GM10248 (cell line): ENCODE measurements at regions of chr7 and their contacts with region 1.

Region 1: DNA sequence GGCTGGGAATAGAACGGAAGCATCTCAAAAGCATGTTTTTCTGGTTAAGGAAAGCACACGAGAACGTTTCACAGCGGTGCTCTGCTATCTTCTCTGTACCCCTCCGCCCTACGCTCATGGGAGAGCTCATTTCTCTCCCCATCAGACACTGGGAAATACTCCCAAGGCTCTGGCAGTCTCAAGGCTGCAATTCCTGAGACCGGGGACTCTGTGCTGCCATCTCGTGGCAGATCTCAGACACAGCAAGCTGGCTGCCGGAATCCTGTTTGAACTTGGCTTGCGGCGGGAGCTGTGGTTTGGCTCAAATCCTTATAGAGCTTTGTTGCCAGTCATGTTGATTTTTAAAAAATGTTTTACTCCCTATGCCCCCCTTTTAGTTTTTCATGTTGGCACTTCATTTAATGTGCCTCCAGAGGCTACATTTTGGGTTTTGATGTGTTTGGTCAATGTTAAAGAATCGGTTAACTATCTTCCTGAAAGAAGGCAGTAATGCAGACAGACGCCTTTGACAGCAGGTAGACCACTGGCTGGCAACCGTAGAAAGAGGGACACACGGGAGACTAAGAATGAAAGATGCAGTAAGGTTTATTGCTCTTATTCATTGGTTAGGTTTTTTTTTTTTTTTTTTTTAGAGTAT is 27.6 kb downstream of the BMPER start:
- DNase-seq: peak; percentile 56
- CTCF ChIP-seq: peak; percentile 94

Region 2: DNA sequence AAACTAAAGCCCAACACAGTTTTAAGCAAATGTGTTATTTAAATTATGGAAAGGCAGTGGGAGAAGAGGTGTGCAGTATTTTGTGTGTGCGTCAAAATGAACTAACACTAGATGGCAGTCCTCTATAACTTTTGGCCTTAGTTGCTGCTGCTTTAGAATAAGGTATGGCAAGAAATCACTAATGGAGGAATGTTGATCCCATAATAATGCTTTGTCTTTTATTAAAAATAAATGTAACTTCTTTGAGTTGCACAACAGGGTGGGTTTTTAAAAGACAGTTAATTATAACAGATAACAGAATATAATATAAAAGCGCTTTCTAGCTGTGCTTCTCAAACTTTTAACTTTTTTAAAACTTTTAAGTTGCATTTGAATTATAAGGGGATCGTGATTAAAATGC is 747.2 kb before region 1 on chr7:
- CTCF ChIA-PET with region 1: interaction called, 38 read pairs
- POLR2A ChIA-PET with region 1: no interaction called
- DNase-seq: peak; percentile 46
- CTCF ChIP-seq: no peak

Region 3: GRCh38 chr7:33459340-33459751 is 473.6 kb before region 1 on chr7:
- CTCF ChIA-PET with region 1: interaction called, 11 read pairs
- POLR2A ChIA-PET with region 1: no interaction called
- DNase-seq: no peak
- CTCF ChIP-seq: peak; percentile 29

Region 4: DNA sequence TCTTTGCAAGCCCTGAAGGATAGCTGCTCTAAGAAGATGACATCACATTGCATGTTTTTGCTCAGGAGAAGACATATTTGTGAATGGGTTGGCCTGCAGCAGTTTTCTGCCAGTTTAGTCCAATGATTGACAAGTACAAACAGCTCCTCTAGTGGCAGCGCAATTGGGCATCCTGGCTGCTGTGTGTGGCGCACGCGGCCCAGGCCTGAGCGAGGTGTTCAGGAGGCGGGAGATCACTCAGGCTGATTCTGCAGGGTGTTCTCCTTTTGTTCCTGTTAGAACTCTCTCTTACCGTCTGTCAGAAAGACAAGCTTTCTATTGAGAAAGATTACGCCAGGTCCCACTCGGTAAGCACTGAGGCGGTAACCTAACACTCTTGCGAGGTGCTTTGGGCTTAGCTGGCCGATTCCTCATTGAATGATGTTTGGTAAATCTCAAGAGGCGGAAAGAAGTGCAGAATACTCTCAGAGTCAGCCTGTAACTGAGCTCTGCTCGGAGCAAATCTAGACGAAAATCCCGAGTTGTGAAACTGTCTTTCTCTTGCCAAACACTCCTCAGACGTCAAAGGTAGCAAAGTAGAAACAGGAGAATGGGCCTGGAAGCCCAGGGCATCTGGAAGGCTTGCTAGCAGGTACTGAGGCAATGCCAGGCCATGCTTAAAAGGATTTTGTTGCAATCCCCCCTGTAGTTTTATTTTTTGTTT is 246.8 kb before region 1 on chr7:
- CTCF ChIA-PET with region 1: no interaction called
- POLR2A ChIA-PET with region 1: no interaction called
- DNase-seq: no peak
- CTCF ChIP-seq: no peak

Region 5: DNA sequence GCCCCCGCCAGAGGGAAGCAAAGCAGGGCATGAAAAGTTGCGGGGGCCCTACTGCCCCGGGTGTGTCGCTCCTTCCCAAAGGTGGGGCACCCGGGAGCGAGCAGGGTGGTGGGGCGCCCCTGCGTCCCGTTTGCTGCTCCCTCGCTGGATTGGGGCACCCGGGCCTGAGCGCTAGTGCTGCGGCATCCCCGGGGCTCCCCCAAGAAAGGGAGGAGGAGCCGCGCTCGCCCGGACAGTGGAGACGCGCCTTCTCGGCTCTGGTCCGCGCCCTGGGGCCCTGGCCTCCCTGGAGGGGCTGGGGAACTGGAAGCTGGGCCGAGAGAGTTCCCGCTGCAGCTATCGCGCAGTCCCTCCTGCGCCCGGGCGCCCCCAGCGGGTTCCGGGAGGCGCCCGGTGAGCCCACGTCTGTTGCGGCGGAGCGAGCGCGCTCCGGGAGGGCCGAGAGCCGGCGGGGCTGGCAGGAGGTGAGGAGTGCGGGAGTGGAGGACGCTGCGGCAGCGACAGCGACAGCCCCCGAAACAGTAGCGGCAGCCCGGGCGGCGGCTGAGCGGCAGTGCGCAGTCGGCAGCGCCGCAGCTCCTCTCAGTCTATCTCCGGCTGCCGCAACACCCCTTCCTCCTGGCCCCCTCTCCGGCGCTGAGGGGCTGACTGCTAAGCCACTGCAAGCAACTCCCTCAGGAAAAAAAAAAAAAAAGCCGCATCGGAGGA is 28.1 kb before region 1 on chr7:
- CTCF ChIA-PET with region 1: interaction called, 24 read pairs
- POLR2A ChIA-PET with region 1: no interaction called
- DNase-seq: peak; percentile 33
- CTCF ChIP-seq: no peak

Region 6: DNA sequence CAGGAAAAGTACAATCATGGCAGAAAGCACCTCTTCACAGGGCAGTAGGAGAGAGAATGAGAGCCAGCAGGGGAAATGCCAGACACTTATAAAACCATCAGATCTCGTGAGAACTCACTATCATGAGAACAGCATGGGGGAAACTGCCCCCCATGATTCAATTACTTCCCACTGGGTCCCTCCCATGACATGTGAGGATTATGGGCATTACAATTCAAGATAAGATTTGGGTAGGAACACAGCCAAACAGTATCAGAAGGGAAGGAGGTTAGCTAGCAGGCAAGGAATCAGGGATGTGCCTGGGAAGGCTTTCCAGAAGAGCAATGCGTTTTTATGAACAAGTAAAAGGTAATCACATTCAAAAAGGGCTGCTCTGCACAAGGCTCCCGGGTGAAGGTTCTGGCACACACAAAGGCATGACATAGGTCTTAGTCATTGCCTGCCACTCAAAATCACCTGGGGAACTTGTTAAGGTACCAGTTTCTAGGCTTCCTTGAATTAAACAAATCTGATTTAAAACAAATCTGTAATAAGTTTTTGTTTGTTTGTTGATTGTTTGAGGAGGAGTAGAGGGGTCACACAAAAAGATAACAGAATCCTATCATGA is 13.2 kb after region 1 on chr7:
- CTCF ChIA-PET with region 1: interaction called, 25 read pairs
- POLR2A ChIA-PET with region 1: no interaction called
- DNase-seq: no peak
- CTCF ChIP-seq: no peak

Region 7: DNA sequence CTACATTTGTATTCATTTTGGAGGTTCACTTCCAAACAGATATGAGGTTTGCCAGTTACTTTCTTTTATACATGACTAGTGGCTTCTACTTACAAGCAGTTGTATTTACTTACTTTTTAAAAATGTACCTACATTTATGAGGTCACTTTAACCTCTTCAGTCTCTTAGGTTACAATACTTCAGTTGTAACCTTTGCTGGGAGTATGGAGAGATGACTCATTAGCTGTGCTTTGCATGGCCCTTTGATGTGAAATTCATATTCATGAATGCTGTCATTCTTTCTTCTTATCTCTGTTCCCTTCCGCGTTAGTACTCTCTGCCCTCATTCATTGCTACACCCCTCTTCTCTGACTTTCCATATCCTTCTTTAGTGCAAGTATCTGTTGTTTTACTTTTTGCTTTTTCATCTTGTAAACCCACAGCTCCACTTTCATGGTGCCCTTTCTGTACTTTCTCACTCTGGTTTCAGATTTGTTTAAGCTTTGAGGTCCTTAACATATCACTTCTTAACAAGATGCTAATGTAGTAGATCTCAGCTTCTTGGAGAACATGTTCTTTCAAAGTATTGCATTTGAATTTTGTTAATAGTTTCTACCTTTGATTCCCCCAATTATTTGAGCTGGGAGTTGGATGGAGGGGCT is 136.8 kb after region 1 on chr7:
- CTCF ChIA-PET with region 1: no interaction called
- POLR2A ChIA-PET with region 1: no interaction called
- DNase-seq: no peak
- CTCF ChIP-seq: no peak